ENCODE measurements at regions of chrX and their contacts with region 1.

Region 1: GRCh38 chrX:119647552-119648420 is 41.6 kb upstream of the NKRF start:
- DNase-seq: peak; percentile 84
- H3K4me3 Mint-ChIP-seq: peak overlapping the region; percentile 54
- H3K27ac Mint-ChIP-seq: peak overlapping the region; percentile 94
- H3K4me1 Mint-ChIP-seq: peaks cover 18% of the 10 kb centered on the region
- H3K27me3 Mint-ChIP-seq: no peaks in the 10 kb centered on the region

Region 2: DNA sequence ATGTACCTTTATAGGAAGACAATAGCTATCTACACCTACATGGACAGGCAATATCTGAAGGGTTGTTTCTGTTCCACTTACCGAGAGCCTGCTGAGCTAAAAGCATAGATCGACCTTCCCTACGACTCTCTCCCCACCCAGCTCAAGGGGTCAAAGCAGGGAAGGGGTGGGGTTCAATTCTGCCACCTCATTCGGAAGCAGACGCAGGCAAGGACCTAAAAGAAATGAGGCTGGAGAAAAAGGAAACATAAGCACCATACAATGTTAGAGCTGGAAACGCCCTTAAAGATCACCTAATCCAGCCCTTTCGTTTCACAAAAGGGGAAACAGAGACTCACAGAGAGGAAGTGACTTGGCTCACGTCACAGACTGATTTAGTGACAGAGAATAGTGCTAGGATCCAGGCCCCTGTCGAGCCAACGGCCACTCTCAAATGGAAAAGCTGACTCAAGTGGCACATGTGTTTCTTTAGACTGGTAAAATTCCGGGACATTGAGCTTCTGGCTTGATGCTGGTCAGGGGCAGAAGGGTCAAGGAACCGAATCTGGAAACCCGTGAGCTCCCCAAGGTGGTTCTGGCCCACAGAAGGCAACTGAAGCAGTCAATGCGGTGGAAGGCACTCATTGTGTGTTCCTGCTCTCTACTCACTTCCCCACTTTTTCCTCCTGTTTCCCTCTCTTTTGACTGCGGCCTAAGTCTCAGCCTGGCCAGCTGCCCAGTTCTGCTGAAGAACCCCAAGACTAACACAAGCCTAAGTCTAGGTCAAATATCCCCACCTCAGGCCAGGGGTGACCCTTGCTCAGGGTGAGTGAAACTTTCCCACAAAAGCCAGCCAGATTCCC is 37.7 kb after region 1 on chrX:
- intact Hi-C with region 1: loop called (anchors 1 kb)
- DNase-seq: peak; percentile 85
- H3K4me3 Mint-ChIP-seq: peak overlapping the region; percentile 96
- H3K27ac Mint-ChIP-seq: peak overlapping the region; percentile 99
- H3K4me1 Mint-ChIP-seq: peaks cover 51% of the 10 kb centered on the region
- H3K27me3 Mint-ChIP-seq: no peaks in the 10 kb centered on the region